ENCODE measurements at regions of chr9 and their contacts with region 1.

Region 1: GRCh38 chr9:33329117-33329563 is 38.8 kb downstream of the NFX1 start:
- DNase-seq: no peak
- ATAC-seq: no peak
- H3K4me3 ChIP-seq: no peak overlapping the region
- H3K4me3 Mint-ChIP-seq: no peak overlapping the region
- H3K27ac ChIP-seq: no peak overlapping the region
- H3K27ac Mint-ChIP-seq: no peak overlapping the region
- H3K4me1 ChIP-seq: no peaks in the 10 kb centered on the region
- H3K4me1 Mint-ChIP-seq: no peaks in the 10 kb centered on the region
- H3K27me3 ChIP-seq: no peaks in the 10 kb centered on the region
- H3K27me3 Mint-ChIP-seq: no peaks in the 10 kb centered on the region

Region 2: GRCh38 chr9:32801530-32801929 is 527.6 kb before region 1 on chr9:
- CTCF ChIA-PET with region 1: no interaction called
- POLR2A ChIA-PET with region 1: no interaction called
- DNase-seq: no peak
- ATAC-seq: no peak
- H3K4me3 ChIP-seq: no peak overlapping the region
- H3K4me3 Mint-ChIP-seq: no peak overlapping the region
- H3K27ac ChIP-seq: no peak overlapping the region
- H3K27ac Mint-ChIP-seq: no peak overlapping the region
- H3K4me1 ChIP-seq: no peaks in the 10 kb centered on the region
- H3K4me1 Mint-ChIP-seq: no peaks in the 10 kb centered on the region
- H3K27me3 ChIP-seq: peaks cover 0 to 4% of the 10 kb centered on the region in 2 experiments
- H3K27me3 Mint-ChIP-seq: peaks cover 14 to 32% of the 10 kb centered on the region in 2 donors

Region 3: GRCh38 chr9:33263131-33263991 is 65.8 kb before region 1 on chr9:
- CTCF ChIA-PET with region 1: interaction called in 1 of 2 experiments, 11 read pairs
- POLR2A ChIA-PET with region 1: no interaction called
- DNase-seq: peak in 12 of 35 experiments; percentile 1 to 22 (median 8)
- ATAC-seq: no peak
- H3K4me3 ChIP-seq: peak overlapping the region; percentile 91 to 93
- H3K4me3 Mint-ChIP-seq: peak overlapping the region; percentile 92 to 93 (median 93)
- H3K27ac ChIP-seq: no peak overlapping the region
- H3K27ac Mint-ChIP-seq: peak overlapping the region; percentile 90 to 92
- H3K4me1 ChIP-seq: peaks cover 9 to 29% of the 10 kb centered on the region in 2 experiments
- H3K4me1 Mint-ChIP-seq: peaks cover 51 to 60% (median 55%) of the 10 kb centered on the region in 3 donors
- H3K27me3 ChIP-seq: no peaks in the 10 kb centered on the region
- H3K27me3 Mint-ChIP-seq: no peaks in the 10 kb centered on the region

Region 4: GRCh38 chr9:35203528-35203927 is 1874.4 kb after region 1 on chr9:
- CTCF ChIA-PET with region 1: no interaction called
- POLR2A ChIA-PET with region 1: no interaction called
- DNase-seq: no peak
- ATAC-seq: no peak
- H3K4me3 ChIP-seq: no peak overlapping the region
- H3K4me3 Mint-ChIP-seq: no peak overlapping the region
- H3K27ac ChIP-seq: no peak overlapping the region
- H3K27ac Mint-ChIP-seq: no peak overlapping the region
- H3K4me1 ChIP-seq: no peaks in the 10 kb centered on the region
- H3K4me1 Mint-ChIP-seq: no peaks in the 10 kb centered on the region
- H3K27me3 ChIP-seq: peaks cover 0 to 6% of the 10 kb centered on the region in 2 experiments
- H3K27me3 Mint-ChIP-seq: peaks cover 8 to 15% of the 10 kb centered on the region in 2 donors